B cell (primary cell): ENCODE measurements at regions of chr22 and their contacts with region 1.

Region 1: GRCh38 chr22:43151251-43152002 is at the start of gene TSPO:
- DNase-seq: peak; percentile 69
- ATAC-seq: peak; percentile 71
- H3K4me3 ChIP-seq: peak within 1 kb of the TSS; percentile 56 to 89 (median 85)
- H3K4me3 Mint-ChIP-seq: peak within 1 kb of the TSS; percentile 92
- H3K27ac ChIP-seq: peak within 1 kb of the TSS; percentile 55 to 61
- H3K27ac Mint-ChIP-seq: peak within 1 kb of the TSS; percentile 88
- H3K4me1 ChIP-seq: peaks cover 38 to 59% of the 10 kb centered on the region in 2 donors
- H3K4me1 Mint-ChIP-seq: peaks cover 47% of the 10 kb centered on the region
- H3K27me3 ChIP-seq: no peaks in the 10 kb centered on the region
- H3K27me3 Mint-ChIP-seq: no peaks in the 10 kb centered on the region
- CTCF ChIP-seq: no peak
- total RNA-seq, gene TSPO: 54.9 and 56.2 TPM in 2 replicates

Region 2: GRCh38 chr22:42533638-42533977 is 617.8 kb before region 1 on chr22:
- CTCF ChIA-PET with region 1: no interaction called
- POLR2A ChIA-PET with region 1: interaction called, 10 read pairs
- intact Hi-C with region 1: no loop called
- DNase-seq: no peak
- ATAC-seq: no peak
- H3K4me3 ChIP-seq: peak overlapping the region in 4 of 5 experiments; percentile 37 to 54 (median 53)
- H3K4me3 Mint-ChIP-seq: peak overlapping the region; percentile 90
- H3K27ac ChIP-seq: peak overlapping the region; percentile 92 to 93
- H3K27ac Mint-ChIP-seq: peak overlapping the region; percentile 97
- H3K4me1 ChIP-seq: peaks cover 38 to 66% of the 10 kb centered on the region in 2 donors
- H3K4me1 Mint-ChIP-seq: peaks cover 67% of the 10 kb centered on the region
- H3K27me3 ChIP-seq: no peaks in the 10 kb centered on the region
- H3K27me3 Mint-ChIP-seq: no peaks in the 10 kb centered on the region
- CTCF ChIP-seq: no peak

Region 3: DNA sequence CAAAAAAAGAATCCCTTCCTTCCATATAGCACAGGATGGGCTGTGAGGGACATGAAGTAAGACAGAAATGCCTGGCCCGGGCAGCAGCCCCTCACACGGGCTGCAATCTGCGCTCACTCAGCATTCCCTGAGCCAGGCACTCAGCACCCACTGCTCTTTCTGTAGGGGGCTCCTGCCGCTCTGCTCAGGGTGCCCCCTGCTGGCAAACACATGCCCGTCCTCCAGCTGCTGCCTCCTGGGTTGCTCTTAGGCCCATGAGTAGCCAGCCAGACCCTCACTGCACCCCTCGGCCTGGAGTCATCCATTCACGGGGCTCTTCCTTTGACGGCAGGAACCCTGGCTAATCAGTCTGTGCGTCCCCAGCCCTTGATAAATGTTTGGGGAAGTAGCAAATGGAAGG is 15.2 kb before region 1 on chr22:
- CTCF ChIA-PET with region 1: interaction called, 10 read pairs
- POLR2A ChIA-PET with region 1: interaction called, 3 read pairs
- intact Hi-C with region 1: no loop called
- DNase-seq: peak; percentile 71
- ATAC-seq: peak; percentile 92
- H3K4me3 ChIP-seq: no peak overlapping the region
- H3K4me3 Mint-ChIP-seq: no peak overlapping the region
- H3K27ac ChIP-seq: no peak overlapping the region
- H3K27ac Mint-ChIP-seq: no peak overlapping the region
- H3K4me1 ChIP-seq: peaks cover 0 to 10% of the 10 kb centered on the region in 2 donors
- H3K4me1 Mint-ChIP-seq: peaks cover 8% of the 10 kb centered on the region
- H3K27me3 ChIP-seq: no peaks in the 10 kb centered on the region
- H3K27me3 Mint-ChIP-seq: no peaks in the 10 kb centered on the region
- CTCF ChIP-seq: peak; percentile 75

Region 4: DNA sequence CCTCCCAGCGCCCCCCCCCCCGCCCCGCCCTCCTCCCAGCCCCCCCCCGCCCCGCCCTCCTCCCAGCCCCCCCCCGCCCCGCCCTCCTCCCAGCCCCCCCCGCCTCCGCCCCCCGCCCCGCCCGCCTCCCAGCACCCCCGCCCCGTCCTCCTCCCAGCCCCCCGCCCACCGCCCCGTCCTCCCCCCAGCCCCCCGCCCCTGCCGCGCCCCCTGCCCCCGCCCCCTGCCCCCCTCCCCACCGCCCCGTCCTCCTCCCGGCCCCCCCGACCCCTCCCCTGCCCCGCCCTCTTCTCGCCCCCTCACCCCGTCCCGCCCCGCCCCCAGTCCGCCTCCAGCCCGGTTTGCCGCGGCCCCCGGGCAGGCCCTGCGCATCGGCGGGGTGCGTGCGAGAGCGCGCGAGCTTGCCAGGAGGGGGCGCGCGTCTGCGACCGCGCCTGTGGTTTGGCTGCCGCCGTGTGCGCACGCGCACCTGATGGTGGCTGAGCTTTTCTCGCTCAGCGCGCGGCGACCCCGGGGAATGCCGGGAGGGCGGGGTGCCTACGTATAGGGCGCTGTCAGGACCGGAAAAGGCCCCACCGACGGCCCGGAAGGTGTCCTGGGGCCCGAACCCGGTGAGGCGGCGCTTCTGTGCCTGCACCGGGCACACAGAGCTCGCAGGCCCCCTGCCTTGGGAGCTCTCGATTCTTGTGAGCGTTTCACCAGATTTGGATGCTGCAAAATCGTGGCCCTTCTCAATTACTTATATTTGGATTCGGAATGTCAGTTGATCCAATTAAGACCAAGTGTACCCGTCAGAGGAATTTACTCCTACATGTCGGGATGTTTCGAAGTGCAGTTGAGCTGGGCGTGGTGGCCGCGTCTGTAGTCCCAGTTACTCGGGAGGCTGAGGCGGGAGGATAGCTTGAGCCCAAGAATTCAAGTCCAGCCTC is 36.0 kb after region 1 on chr22:
- CTCF ChIA-PET with region 1: interaction called, 4 read pairs
- POLR2A ChIA-PET with region 1: interaction called, 3 read pairs
- intact Hi-C with region 1: loop called (anchors 1 kb)
- DNase-seq: peak; percentile 99
- ATAC-seq: peak; percentile 85
- H3K4me3 ChIP-seq: peak overlapping the region; percentile 47 to 67 (median 58)
- H3K4me3 Mint-ChIP-seq: peak overlapping the region; percentile 88
- H3K27ac ChIP-seq: peak overlapping the region; percentile 95 to 98
- H3K27ac Mint-ChIP-seq: peak overlapping the region; percentile 96
- H3K4me1 ChIP-seq: peaks cover 14 to 19% of the 10 kb centered on the region in 2 donors
- H3K4me1 Mint-ChIP-seq: peaks cover 18% of the 10 kb centered on the region
- H3K27me3 ChIP-seq: peaks cover 0 to 11% (median 0%) of the 10 kb centered on the region in 4 experiments
- H3K27me3 Mint-ChIP-seq: peaks cover 8% of the 10 kb centered on the region
- CTCF ChIP-seq: peak; percentile 70

Region 5: GRCh38 chr22:43385770-43386641 is 234.6 kb after region 1 on chr22:
- CTCF ChIA-PET with region 1: no interaction called
- POLR2A ChIA-PET with region 1: no interaction called
- intact Hi-C with region 1: no loop called
- DNase-seq: peak; percentile 76
- ATAC-seq: peak; percentile 81
- H3K4me3 ChIP-seq: no peak overlapping the region
- H3K4me3 Mint-ChIP-seq: no peak overlapping the region
- H3K27ac ChIP-seq: no peak overlapping the region
- H3K27ac Mint-ChIP-seq: peak overlapping the region; percentile 41
- H3K4me1 ChIP-seq: peaks cover 2 to 3% of the 10 kb centered on the region in 2 donors
- H3K4me1 Mint-ChIP-seq: peaks cover 3% of the 10 kb centered on the region
- H3K27me3 ChIP-seq: peaks cover 0 to 25% (median 6%) of the 10 kb centered on the region in 4 experiments
- H3K27me3 Mint-ChIP-seq: peaks cover 23% of the 10 kb centered on the region
- CTCF ChIP-seq: peak; percentile 82